Left colon (tissue), 2 donors: ENCODE measurements at regions of chr12 and their contacts with region 1.

Region 1: GRCh38 chr12:31659087-31659933 is at the start of gene ETFBKMT:
- DNase-seq: peak; percentile 91 to 95
- ATAC-seq: peak; percentile 94
- total RNA-seq, gene ETFBKMT: 2.9 to 5.2 TPM

Region 2: GRCh38 chr12:31715283-31715825 is 56.0 kb after region 1 on chr12:
- intact Hi-C with region 1: no loop called
- DNase-seq: no peak
- ATAC-seq: no peak

Region 3: GRCh38 chr12:32302218-32303173 is 643.2 kb after region 1 on chr12:
- intact Hi-C with region 1: loop called (anchors 10 kb)
- DNase-seq: peak in 1 of 2 donors; percentile 28
- ATAC-seq: peak; percentile 92